Activated CD4-positive, alpha-beta T cell treated with anti-CD3 and anti-CD28 coated beads, Interleukin-2, amount 10 ng/mL, durations not matched to agents 24 days and 14 days (primary cell): ENCODE measurements at regions of chr15 and their contacts with region 1.

Region 1: DNA sequence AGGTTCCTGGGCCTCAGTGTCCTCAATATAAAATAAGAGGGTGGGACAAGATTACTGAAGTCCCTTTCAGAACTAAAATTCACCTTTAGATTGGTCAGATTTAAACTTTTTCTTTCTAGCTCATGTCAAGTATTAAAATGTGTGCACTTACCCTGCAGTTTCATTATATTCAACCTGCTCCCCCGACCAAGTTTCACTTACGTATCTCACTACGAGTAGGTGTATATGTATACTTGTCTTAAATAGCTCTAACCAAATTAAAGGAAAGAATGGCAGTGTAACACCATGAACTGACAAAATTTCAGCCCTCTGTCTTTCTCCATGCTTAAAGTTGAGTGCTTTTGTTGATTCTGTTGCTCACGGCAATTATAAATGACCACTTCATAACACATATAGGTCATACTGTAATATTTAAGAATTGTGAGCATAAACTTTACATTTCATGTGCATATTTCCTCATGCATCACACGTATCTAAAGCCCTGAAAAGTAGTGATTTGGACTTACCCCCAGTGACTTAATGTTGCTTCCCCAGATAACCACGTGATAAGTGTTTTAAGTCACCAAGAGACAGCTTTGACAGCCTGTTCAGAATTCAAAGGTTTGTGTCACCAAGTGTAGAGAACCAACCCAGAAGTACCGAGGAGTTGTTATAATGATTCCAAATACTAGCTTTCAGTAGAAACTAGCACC is 70.0 kb downstream of the PGPEP1L start:
- DNase-seq: no peak
- H3K4me3 Mint-ChIP-seq: no peak overlapping the region
- H3K27ac Mint-ChIP-seq: peak overlapping the region; percentile 58
- H3K4me1 Mint-ChIP-seq: peaks cover 9% of the 10 kb centered on the region
- H3K27me3 Mint-ChIP-seq: no peaks in the 10 kb centered on the region

Region 2: GRCh38 chr15:98873441-98874201 is 63.9 kb before region 1 on chr15:
- intact Hi-C with region 1: loop called (anchors 10 kb)
- DNase-seq: no peak
- H3K4me3 Mint-ChIP-seq: peak overlapping the region; percentile 31
- H3K27ac Mint-ChIP-seq: peak overlapping the region; percentile 9
- H3K4me1 Mint-ChIP-seq: peaks cover 22% of the 10 kb centered on the region
- H3K27me3 Mint-ChIP-seq: no peaks in the 10 kb centered on the region